IMR-90 (cell line): ENCODE measurements at regions of chr2 and their contacts with region 1.

Region 1: GRCh38 chr2:209322041-209322440 is 101.8 kb upstream of the MAP2 start:
- DNase-seq: no peak
- ATAC-seq: no peak
- H3K4me3 ChIP-seq: no peak overlapping the region
- H3K27ac ChIP-seq: no peak overlapping the region
- H3K4me1 ChIP-seq: no peaks in the 10 kb centered on the region
- H3K27me3 ChIP-seq: no peaks in the 10 kb centered on the region
- CTCF ChIP-seq: no peak
- POLR2A ChIP-seq: no peak
- RAD21 ChIP-seq: no peak

Region 2: GRCh38 chr2:208407667-208408066 is 914.4 kb before region 1 on chr2:
- CTCF ChIA-PET with region 1: no interaction called
- POLR2A ChIA-PET with region 1: no interaction called
- dilution Hi-C with region 1: no loop called
- in situ Hi-C with region 1: loop called (anchors 25 kb)
- intact Hi-C with region 1: no loop called
- DNase-seq: peak; percentile 2
- ATAC-seq: no peak
- H3K4me3 ChIP-seq: no peak overlapping the region
- H3K27ac ChIP-seq: no peak overlapping the region
- H3K4me1 ChIP-seq: peaks cover 5% of the 10 kb centered on the region; the same call in 1 of the 2 replicates
- H3K27me3 ChIP-seq: peaks cover 23% of the 10 kb centered on the region
- CTCF ChIP-seq: peak; percentile 37
- POLR2A ChIP-seq: no peak
- RAD21 ChIP-seq: peak; percentile 45

Region 3: GRCh38 chr2:209230560-209230959 is 91.5 kb before region 1 on chr2:
- CTCF ChIA-PET with region 1: no interaction called
- POLR2A ChIA-PET with region 1: no interaction called
- dilution Hi-C with region 1: no loop called
- in situ Hi-C with region 1: no loop called
- intact Hi-C with region 1: no loop called
- DNase-seq: no peak
- ATAC-seq: no peak
- H3K4me3 ChIP-seq: no peak overlapping the region
- H3K27ac ChIP-seq: no peak overlapping the region
- H3K4me1 ChIP-seq: no peaks in the 10 kb centered on the region
- H3K27me3 ChIP-seq: no peaks in the 10 kb centered on the region
- CTCF ChIP-seq: no peak
- POLR2A ChIP-seq: no peak
- RAD21 ChIP-seq: no peak